ENCODE measurements at regions of chr20 and their contacts with region 1.

Region 1: GRCh38 chr20:57244627-57245214 is 21.7 kb downstream of the BMP7 start:
- DNase-seq: peak; percentile 63
- ATAC-seq: peak; percentile 95
- H3K4me3 Mint-ChIP-seq: no peak overlapping the region
- H3K27ac Mint-ChIP-seq: peak overlapping the region; percentile 48; the same call in 1 of the 2 replicates
- H3K4me1 Mint-ChIP-seq: peaks cover 15% of the 10 kb centered on the region
- H3K27me3 Mint-ChIP-seq: peaks cover 6% of the 10 kb centered on the region; the same call in 1 of the 2 replicates
- CTCF ChIP-seq: no peak

Region 2: DNA sequence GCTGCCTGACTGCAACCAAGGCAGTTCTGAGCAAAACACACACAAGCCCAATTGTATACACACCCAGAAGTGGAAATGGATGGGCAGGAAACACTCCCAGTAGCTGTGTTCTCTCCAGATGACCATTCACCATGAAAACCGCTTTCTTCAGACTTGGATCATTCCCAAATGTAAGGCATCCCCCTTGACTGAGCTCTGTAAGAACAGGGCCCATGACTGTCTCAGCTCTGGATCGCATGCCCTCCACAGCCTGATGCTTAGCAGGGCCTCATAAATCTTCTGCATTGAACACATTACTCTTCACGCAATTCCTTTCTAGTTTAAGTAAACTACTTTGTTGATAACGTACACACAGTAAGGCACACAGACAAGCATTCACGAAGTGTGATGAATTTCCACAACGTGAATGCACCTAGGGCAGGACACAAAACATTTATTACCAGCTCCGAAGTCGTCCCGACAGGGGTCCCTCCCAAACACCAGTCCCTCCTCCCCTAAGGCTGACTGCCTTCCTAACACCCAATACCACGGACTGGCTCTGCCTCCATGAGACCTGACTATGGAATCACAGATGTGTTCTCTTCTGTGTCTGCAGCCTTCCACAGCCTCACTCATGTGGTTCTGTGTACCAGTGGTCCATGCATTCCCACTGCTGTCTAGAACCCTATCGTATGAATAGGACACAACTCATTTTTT is 10.0 kb before region 1 on chr20:
- CTCF ChIA-PET with region 1: interaction called, 12 read pairs
- POLR2A ChIA-PET with region 1: no interaction called
- DNase-seq: no peak
- ATAC-seq: no peak
- H3K4me3 Mint-ChIP-seq: no peak overlapping the region
- H3K27ac Mint-ChIP-seq: no peak overlapping the region
- H3K4me1 Mint-ChIP-seq: peaks cover 53% of the 10 kb centered on the region
- H3K27me3 Mint-ChIP-seq: peaks cover 28% of the 10 kb centered on the region
- CTCF ChIP-seq: no peak

Region 3: GRCh38 chr20:57263801-57264792 is 19.4 kb after region 1 on chr20:
- CTCF ChIA-PET with region 1: interaction called, 12 read pairs
- POLR2A ChIA-PET with region 1: no interaction called
- DNase-seq: no peak
- ATAC-seq: no peak
- H3K4me3 Mint-ChIP-seq: peak overlapping the region; percentile 85
- H3K27ac Mint-ChIP-seq: peak overlapping the region; percentile 80; the same call in 1 of the 2 replicates
- H3K4me1 Mint-ChIP-seq: peaks cover 73% of the 10 kb centered on the region
- H3K27me3 Mint-ChIP-seq: peaks cover 88% of the 10 kb centered on the region
- CTCF ChIP-seq: no peak

Region 4: GRCh38 chr20:57290749-57291402 is 46.2 kb after region 1 on chr20:
- CTCF ChIA-PET with region 1: interaction called, 10 read pairs
- POLR2A ChIA-PET with region 1: no interaction called
- DNase-seq: peak; percentile 66
- ATAC-seq: peak; percentile 94
- H3K4me3 Mint-ChIP-seq: no peak overlapping the region
- H3K27ac Mint-ChIP-seq: no peak overlapping the region
- H3K4me1 Mint-ChIP-seq: peaks cover 47% of the 10 kb centered on the region
- H3K27me3 Mint-ChIP-seq: peaks cover 4% of the 10 kb centered on the region
- CTCF ChIP-seq: 0 out of 2 replicates have a peak, but pooled peaks have one; percentile 30

Region 5: DNA sequence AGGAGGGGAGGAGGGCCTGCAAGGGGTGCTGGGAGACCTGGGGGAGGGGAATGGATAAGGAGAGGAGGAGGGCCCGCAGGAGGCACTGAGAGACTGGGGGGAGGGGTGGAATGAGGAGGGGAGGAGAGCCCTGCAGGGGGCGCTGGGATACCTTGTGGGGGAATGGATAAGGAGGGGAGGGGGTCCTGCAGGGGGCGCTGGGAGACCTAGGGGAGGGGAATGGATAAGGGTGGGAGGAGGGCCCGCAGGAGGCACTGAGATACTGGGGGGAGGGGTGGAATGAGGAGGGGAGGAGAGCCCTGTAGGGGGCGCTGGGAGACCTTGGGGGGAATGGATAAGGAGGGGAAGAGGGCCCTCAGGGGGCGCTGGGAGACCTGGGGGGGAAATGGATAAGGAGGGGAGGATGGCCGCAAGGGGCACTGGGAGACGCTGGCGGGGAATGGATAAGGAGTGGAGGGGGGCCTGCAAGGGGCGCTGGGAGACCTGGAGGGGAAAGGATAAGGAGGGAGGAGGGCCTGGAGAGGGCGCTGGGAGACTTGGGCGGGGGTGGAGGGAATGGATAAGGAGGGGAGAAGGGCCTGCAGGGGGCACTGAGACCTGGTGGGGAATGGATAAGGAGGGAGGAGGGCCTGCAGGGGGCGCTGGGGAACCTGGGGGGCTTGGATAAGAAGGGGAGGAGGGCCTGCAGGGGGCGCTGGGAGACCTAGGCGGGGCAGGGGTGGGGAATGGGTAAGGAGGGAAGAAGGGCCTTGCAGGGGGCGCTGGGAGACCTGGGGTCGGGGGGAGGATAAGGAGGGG is 281.6 kb after region 1 on chr20:
- CTCF ChIA-PET with region 1: no interaction called
- POLR2A ChIA-PET with region 1: no interaction called
- DNase-seq: peak; percentile 70
- ATAC-seq: peak; percentile 57
- H3K4me3 Mint-ChIP-seq: no peak overlapping the region
- H3K27ac Mint-ChIP-seq: no peak overlapping the region
- H3K4me1 Mint-ChIP-seq: peaks cover 24% of the 10 kb centered on the region
- H3K27me3 Mint-ChIP-seq: no peaks in the 10 kb centered on the region
- CTCF ChIP-seq: no peak; the same call in 1 of the 2 replicates

Measured in WTC11 (cell line).